ENCODE measurements at regions of chr11 and their contacts with region 1.

Region 1: DNA sequence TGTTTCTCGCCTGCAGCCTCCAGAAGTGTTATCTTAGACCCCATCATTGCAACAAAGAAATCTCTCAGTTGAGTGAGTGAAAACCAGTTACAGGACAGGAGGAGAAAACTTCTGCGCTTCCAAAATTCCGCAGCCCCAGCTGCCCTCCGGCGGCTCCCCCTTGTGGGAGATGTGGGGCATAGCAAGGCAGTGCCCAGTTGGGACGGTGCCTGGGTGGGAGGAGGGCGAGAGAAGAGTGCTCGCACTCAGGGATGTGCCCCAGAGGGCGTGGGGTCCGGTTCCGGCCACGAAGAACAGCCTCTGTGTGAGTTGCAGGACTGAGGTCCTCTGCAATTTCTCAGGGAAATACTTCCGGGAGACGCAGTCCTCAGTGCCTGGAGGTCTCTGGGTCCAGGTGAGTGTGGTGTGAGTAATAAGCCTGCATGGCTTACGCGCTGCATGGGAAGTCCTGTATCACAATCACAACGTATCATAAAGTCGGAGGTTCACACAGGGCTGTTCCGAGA is 87.0 kb upstream of the BLID start:
- DNase-seq: peak in 1 of 2 experiments; percentile 69
- H3K4me3 ChIP-seq: no peak overlapping the region
- H3K27ac ChIP-seq: no peak overlapping the region
- H3K4me1 ChIP-seq: peaks cover 7% of the 10 kb centered on the region
- H3K27me3 ChIP-seq: no peaks in the 10 kb centered on the region
- CTCF ChIP-seq: peak; percentile 89

Region 2: DNA sequence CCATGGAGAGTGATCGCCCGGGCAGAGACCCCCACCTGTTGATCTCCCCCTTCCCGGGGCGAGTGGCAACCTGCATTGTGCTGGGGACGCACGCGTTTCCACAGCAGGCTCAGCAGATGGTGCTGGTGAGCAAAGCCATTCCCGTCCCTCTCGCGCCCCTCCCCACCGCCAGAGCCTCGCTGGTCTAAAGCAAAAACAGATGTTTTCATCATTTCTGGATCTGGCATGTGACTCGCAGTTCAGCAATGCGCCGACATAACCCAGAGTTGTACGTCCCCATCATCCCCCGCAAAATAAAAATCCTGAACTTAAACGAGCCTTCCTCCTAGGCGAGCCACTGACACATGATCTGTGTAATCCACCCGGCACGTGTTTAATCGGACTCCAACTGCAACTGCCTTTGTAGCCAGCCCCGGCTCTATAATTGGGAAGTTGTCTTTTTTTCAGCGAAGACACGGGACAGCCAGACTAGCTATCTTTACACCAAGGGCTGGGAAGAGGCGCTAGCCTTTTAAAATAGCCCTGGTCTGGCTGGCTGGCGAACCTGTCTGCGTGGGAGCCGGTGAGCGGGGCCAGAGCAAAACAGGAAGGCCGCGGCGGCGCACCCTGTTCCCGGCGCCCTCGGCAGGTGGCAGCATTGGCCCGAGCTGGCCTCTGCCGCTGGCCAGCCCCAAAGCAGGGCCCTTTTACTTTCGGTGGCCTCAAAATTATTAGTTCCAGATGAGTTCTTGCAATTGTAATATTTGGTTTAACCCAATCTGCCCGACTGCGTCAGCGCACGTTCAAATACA is 547.3 kb before region 1 on chr11:
- CTCF ChIA-PET with region 1: no interaction called
- POLR2A ChIA-PET with region 1: no interaction called
- intact Hi-C with region 1: loop called (anchors 1 kb)
- DNase-seq: peak; percentile 58 to 81
- H3K4me3 ChIP-seq: peak overlapping the region; percentile 60
- H3K27ac ChIP-seq: peak overlapping the region; percentile 52
- H3K4me1 ChIP-seq: peaks cover 11% of the 10 kb centered on the region; the same call in 1 of the 2 replicates
- H3K27me3 ChIP-seq: no peaks in the 10 kb centered on the region
- CTCF ChIP-seq: peak; percentile 94

Region 3: DNA sequence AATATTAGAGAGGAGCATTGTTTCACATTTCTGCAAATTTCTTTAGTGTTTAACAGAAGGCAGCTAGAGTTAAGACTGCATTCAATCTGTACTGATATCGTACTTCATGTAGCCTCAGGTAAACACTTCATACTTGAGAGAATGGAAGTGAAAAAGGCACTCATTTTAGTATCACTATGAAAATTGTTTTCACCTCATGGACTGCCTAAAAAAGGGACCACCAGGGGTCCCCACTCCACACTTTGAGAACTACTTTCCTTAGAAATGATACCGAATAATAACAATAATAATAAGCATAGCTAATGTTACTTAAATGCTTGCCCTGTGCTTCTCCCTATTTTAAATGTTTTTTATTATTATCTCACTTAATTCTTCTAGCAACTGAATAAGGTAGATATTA is 182.1 kb before region 1 on chr11:
- CTCF ChIA-PET with region 1: no interaction called
- POLR2A ChIA-PET with region 1: no interaction called
- intact Hi-C with region 1: loop called (anchors 5 kb)
- DNase-seq: no peak
- H3K4me3 ChIP-seq: no peak overlapping the region
- H3K27ac ChIP-seq: no peak overlapping the region
- H3K4me1 ChIP-seq: no peaks in the 10 kb centered on the region
- H3K27me3 ChIP-seq: no peaks in the 10 kb centered on the region
- CTCF ChIP-seq: peak; percentile 48

Region 4: GRCh38 chr11:122108192-122108799 is 94.7 kb before region 1 on chr11:
- CTCF ChIA-PET with region 1: interaction called, 7 read pairs
- POLR2A ChIA-PET with region 1: no interaction called
- intact Hi-C with region 1: loop called (anchors 2 kb)
- DNase-seq: no peak
- H3K4me3 ChIP-seq: no peak overlapping the region
- H3K27ac ChIP-seq: no peak overlapping the region
- H3K4me1 ChIP-seq: no peaks in the 10 kb centered on the region
- H3K27me3 ChIP-seq: no peaks in the 10 kb centered on the region
- CTCF ChIP-seq: peak; percentile 76

Region 5: GRCh38 chr11:122146475-122146874 is 56.5 kb before region 1 on chr11:
- CTCF ChIA-PET with region 1: no interaction called
- POLR2A ChIA-PET with region 1: no interaction called
- intact Hi-C with region 1: no loop called
- DNase-seq: peak in 1 of 2 experiments; percentile 77
- H3K4me3 ChIP-seq: no peak overlapping the region
- H3K27ac ChIP-seq: no peak overlapping the region
- H3K4me1 ChIP-seq: peaks cover 22% of the 10 kb centered on the region
- H3K27me3 ChIP-seq: no peaks in the 10 kb centered on the region
- CTCF ChIP-seq: no peak

Region 6: GRCh38 chr11:122159173-122159721 is 43.8 kb before region 1 on chr11:
- CTCF ChIA-PET with region 1: no interaction called
- POLR2A ChIA-PET with region 1: interaction called, 3 read pairs
- intact Hi-C with region 1: loop called (anchors 5 kb)
- DNase-seq: no peak
- H3K4me3 ChIP-seq: no peak overlapping the region
- H3K27ac ChIP-seq: no peak overlapping the region
- H3K4me1 ChIP-seq: peaks cover 32% of the 10 kb centered on the region
- H3K27me3 ChIP-seq: no peaks in the 10 kb centered on the region
- CTCF ChIP-seq: no peak

Region 7: GRCh38 chr11:122642472-122642922 is 439.5 kb after region 1 on chr11:
- CTCF ChIA-PET with region 1: no interaction called
- POLR2A ChIA-PET with region 1: no interaction called
- intact Hi-C with region 1: no loop called
- DNase-seq: peak; percentile 41 to 98
- H3K4me3 ChIP-seq: peak overlapping the region; percentile 26; the same call in 1 of the 2 replicates
- H3K27ac ChIP-seq: peak overlapping the region; percentile 88
- H3K4me1 ChIP-seq: peaks cover 49% of the 10 kb centered on the region
- H3K27me3 ChIP-seq: no peaks in the 10 kb centered on the region
- CTCF ChIP-seq: no peak

Measured in PC-9 (cell line).